ENCODE measurements at regions of chr9 and their contacts with region 1.

Region 1: DNA sequence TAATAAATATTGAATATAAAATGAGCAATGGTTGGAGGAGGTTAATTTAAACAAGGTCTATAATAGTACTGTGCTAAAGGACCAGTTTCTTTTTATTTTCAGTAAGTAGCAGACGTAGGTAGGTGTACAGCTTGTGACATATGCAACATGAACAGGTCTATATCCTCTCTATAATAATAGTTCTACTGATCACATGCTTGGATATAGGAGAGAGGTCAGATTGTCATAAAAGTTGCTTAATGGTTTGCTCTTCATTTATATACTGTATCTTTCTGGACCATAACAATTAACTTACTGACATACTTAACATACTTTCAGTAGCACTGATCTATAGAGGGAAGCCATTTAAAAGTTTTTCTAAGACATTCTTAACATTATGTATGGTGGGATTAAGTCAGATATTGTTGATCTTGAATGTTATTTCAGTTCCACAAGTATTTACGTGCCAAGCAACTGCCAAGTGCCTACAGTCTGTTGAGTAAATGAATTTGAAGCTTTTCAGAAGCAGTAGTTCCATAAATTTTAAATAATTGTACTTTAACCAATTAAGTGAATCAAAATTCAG is 68.0 kb downstream of the DENND4C start:
- DNase-seq: no peak
- H3K4me3 ChIP-seq: no peak overlapping the region
- H3K27ac ChIP-seq: no peak overlapping the region
- H3K4me1 ChIP-seq: no peaks in the 10 kb centered on the region
- H3K27me3 ChIP-seq: no peaks in the 10 kb centered on the region
- CTCF ChIP-seq: no peak
- POLR2A ChIP-seq: no peak

Region 2: DNA sequence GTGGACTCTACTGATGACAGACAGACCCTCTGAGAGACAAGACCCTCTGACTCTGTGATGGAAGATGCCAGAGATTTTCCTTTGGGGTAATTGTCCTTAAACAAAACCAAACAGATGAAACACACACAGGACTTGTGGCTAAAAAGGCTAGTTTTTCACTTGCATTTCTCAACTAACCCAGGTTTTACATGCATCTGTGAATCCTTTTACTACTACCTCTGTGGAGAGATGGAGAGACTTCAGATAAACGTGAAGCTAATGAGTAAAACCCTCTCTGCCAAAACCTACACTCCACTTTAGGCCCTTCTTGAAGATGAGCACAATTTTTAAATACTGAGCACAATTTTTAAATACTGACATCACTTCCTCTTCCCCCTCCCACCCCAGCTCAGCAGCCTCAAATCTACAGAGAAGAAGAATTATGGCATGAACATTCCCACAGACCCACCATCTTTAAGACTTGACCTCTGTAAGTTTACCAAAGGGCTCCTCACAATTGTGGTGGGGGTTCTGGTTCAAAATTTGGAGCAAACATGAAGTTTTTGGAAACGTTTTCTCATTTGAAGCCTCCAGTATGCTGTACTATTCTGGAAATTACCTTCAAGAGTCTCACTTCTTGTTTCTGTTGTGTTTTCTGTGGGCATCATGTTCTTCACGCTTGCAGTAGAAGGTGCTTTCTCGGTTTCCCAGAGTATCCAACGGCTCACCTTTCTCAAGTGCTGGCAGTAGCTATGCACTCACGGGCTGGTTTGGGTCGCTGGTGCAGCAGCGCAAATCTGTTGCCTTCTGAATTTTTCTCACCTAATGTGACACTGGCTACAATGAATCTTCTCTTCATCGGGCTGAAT is 152.9 kb after region 1 on chr9:
- CTCF ChIA-PET with region 1: no interaction called
- POLR2A ChIA-PET with region 1: no interaction called
- dilution Hi-C with region 1: no loop called
- intact Hi-C with region 1: loop called (anchors 5 kb)
- DNase-seq: no peak
- H3K4me3 ChIP-seq: no peak overlapping the region
- H3K27ac ChIP-seq: no peak overlapping the region
- H3K4me1 ChIP-seq: no peaks in the 10 kb centered on the region
- H3K27me3 ChIP-seq: no peaks in the 10 kb centered on the region
- CTCF ChIP-seq: no peak
- POLR2A ChIP-seq: no peak

Measured in endothelial cell of umbilical vein (primary cell).